AG04449 (cell line): ENCODE measurements at regions of chr11 and their contacts with region 1.

Region 1: DNA sequence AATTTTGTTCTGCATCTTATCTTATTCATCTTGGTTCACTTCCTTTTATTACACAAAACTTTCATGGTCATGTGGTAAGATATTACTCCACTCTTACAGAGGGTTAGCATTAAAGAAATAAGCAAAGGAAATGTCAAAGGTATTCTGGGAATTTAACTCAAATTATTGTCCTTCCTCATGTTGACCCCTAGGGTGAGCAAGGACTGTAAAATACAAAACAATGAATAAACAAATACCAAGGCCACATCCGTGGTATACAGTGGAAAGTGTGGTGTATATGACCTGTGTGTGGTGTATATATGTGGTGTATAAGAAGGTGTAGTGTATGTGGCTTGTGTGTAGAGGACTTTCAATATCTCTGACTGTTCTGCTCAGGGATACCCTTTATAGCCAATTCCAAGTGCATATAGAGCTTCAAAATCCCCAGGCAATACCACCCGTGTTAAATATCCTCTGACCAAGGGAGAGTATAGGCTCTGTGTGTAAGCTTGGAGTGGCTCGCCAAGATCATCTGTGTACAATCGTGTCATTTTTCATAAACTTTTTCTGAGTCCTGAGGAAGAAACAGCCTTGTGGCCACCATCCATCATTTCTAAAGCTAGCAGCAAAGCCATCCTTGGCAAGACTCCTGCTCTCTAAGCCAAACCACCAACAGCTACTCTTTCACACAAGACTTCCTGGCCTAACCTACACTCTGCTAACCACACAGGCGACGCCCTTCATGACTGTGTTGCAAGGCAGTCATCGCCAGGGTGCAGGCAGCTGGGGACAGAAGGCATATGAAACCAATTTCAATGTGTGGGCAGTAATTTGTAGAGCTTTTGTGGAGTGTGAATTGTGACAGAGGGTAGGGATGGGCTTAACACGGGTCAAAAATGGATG is 548.0 kb downstream of the ETS1 start:
- DNase-seq: peak; percentile 57
- H3K4me3 ChIP-seq: no peak overlapping the region
- CTCF ChIP-seq: no peak

Region 2: DNA sequence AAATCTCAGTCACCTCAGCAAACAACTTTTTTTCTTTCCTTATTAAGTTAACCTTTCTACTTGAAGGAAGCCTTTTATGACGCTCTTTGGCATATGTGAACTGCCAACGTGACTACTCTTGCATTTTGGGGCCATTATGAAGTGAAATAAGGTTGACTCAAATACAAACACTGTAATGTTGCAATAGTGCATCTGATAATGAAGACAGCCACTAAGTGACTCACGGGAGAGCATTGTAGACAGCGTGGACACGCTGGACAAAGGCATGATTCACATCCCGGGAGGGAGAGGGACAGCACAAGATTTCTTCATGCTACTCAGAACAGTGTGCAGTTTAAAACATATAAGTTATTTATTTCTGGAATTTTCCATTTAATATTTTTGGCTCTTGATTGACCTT is 12.8 kb before region 1 on chr11:
- CTCF ChIA-PET with region 1: interaction called, 17 read pairs
- POLR2A ChIA-PET with region 1: no interaction called
- DNase-seq: peak; percentile 89
- H3K4me3 ChIP-seq: no peak overlapping the region
- CTCF ChIP-seq: no peak

Region 3: DNA sequence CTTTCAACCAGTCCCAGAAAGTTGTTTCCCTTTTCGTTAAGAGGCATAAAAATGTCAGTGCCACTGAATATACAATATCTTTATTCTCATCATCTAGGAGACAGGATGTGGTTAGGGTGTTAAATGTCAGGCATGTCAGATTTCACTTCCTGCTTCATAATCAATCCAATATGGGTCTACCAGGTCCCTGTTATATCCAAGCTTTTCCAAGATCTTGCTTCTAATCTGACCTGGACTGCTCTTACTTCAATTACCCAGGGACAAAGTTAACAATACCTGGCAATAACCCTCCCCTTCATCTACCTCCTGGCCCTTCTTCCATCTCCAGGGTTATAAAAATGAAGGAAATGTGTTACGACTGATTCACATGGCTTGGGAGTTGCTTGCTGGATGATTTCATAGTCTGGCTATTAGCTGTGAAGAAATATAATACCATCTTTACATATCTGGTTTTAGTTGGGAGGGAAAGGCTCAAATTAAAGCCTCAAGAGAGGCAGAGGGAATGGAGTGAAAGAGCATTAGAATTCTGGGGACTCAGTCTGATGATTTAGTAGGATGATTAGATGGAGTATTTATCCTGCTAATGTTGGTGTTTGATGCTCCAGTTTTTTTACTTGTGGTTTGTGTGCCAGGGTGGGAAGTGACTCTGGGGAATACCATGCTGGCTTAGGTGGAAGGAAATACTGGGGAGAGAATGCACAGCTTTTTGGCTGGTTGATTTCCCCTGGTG is 13.7 kb after region 1 on chr11:
- CTCF ChIA-PET with region 1: interaction called, 22 read pairs
- POLR2A ChIA-PET with region 1: interaction called, 10 read pairs
- DNase-seq: peak; percentile 77
- H3K4me3 ChIP-seq: no peak overlapping the region
- CTCF ChIP-seq: no peak

Region 4: GRCh38 chr11:128116885-128117284 is 77.5 kb after region 1 on chr11:
- CTCF ChIA-PET with region 1: no interaction called
- POLR2A ChIA-PET with region 1: no interaction called
- DNase-seq: no peak
- H3K4me3 ChIP-seq: no peak overlapping the region
- CTCF ChIP-seq: no peak